Heart left ventricle (tissue), 16 donors: ENCODE measurements at regions of chr1 and their contacts with region 1.

Region 1: DNA sequence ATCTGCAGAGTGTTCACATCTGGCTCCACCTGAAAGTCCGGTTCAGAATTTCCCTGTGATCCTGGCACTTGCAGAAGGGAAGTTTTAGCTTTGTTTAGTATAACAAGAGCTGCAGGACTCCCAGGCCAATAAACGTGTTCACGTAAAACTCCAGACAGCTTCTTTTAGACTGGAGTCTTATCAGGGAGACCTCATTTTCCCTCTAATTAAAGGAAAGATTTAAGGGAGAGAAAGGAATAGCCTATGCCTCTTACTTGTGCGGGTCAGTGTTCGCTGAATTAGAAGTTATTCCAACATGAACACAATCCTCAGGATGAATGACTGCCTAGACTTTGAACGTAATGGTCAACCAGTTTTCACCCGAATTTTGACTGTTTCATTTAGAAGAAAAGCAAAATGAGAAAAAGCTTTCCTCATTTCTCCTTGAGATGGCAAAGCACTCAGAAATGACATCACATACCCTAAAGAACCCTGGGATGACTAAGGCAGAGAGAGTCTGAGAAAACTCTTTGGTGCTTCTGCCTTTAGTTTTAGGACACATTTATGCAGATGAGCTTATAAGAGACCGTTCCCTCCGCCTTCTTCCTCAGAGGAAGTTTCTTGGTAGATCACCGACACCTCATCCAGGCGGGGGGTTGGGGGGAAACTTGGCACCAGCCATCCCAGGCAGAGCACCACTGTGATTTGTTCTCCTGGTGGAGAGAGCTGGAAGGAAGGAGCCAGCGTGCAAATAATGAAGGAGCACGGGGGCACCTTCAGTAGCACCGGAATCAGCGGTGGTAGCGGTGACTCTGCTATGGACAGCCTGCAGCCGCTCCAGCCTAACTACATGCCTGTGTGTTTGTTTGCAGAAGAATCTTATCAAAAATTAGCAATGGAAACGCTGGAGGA is 202.1 kb upstream of the SGIP1 start:
- DNase-seq: peak; percentile 77 to 86 (median 80)
- ATAC-seq: peak; percentile 48 to 73 (median 65)
- H3K4me3 ChIP-seq: peak overlapping the region; percentile 28 to 71 (median 63)
- H3K27ac ChIP-seq: peak overlapping the region; percentile 76 to 98 (median 86)
- H3K4me1 ChIP-seq: peaks cover 4 to 75% (median 36%) of the 10 kb centered on the region in 12 donors
- H3K27me3 ChIP-seq: no peaks in the 10 kb centered on the region
- CTCF ChIP-seq: peak in 6 of 12 donors; percentile 8 to 41 (median 22)
- POLR2A ChIP-seq: peak in 1 of 2 donors; percentile 49

Region 2: DNA sequence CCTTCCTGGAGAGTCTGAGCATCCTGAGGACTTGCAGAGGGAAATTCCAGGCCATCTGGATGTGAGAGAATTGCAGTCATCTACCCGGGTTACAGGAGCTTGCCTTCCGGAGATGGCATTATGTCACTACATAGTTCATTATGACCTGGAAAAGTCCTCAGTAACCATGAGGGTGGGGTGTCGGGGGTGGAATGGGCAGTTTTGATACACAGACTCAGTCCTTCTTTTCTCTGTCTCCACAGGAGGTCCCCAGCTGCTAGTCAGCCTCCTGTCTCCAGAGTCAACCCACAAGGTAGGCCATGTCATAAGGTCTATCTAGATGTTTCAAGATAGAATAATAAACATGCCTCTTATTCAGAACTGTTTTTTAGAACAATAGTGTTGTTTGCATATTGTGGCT is 66.1 kb before region 1 on chr1:
- intact Hi-C with region 1: loop called in 6 of 10 experiments (anchors 2 to 5 kb)
- DNase-seq: peak in 2 of 5 donors; percentile 20 to 33
- ATAC-seq: peak in 2 of 4 donors; percentile 38 to 85
- H3K4me3 ChIP-seq: no peak overlapping the region
- H3K27ac ChIP-seq: peak overlapping the region in 7 of 12 donors; percentile 27 to 56 (median 45)
- H3K4me1 ChIP-seq: peaks cover 8 to 72% (median 27%) of the 10 kb centered on the region in 12 donors
- H3K27me3 ChIP-seq: no peaks in the 10 kb centered on the region
- CTCF ChIP-seq: peak in 1 of 12 donors; percentile 19
- POLR2A ChIP-seq: no peak

Region 3: GRCh38 chr1:66271216-66271903 is 60.5 kb before region 1 on chr1:
- intact Hi-C with region 1: loop called in 9 of 10 experiments (anchors 1 to 5 kb)
- DNase-seq: peak; percentile 72 to 92 (median 89)
- ATAC-seq: peak; percentile 90 to 96 (median 92)
- H3K4me3 ChIP-seq: peak overlapping the region in 9 of 12 donors; percentile 3 to 47 (median 17)
- H3K27ac ChIP-seq: peak overlapping the region; percentile 67 to 94 (median 84)
- H3K4me1 ChIP-seq: peaks cover 9 to 96% (median 51%) of the 10 kb centered on the region in 12 donors
- H3K27me3 ChIP-seq: no peaks in the 10 kb centered on the region
- CTCF ChIP-seq: no peak
- POLR2A ChIP-seq: peak in 1 of 2 donors; percentile 38

Region 4: DNA sequence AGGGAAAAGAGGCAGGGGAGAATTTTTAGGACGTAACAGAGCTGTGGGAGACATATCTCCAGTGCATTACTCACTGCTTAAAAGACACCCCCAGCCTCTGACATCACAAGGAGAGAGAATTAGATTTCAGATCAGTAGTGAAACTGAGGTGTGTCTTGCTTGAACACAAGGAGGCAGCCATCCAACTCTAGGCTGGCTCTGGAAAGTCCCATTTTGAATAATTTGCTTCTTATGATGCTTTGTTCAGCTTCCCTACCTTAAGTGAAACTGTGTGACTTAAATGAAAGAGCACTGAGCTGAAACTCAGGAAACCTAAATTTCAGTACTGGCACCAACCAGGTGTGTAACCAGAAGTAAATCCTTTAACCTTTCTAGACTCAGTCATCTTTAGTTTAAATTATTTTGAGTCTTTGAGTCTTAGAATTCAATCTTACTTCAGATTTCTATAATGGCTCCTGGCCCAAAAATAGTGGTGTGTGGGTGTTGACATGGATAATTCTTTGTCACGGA is 49.5 kb before region 1 on chr1:
- intact Hi-C with region 1: loop called in 1 of 10 experiments (anchors 5 kb)
- DNase-seq: peak in 1 of 5 donors; percentile 28
- ATAC-seq: peak in 3 of 4 donors; percentile 41 to 81 (median 77)
- H3K4me3 ChIP-seq: no peak overlapping the region
- H3K27ac ChIP-seq: peak overlapping the region in 5 of 12 donors; percentile 7 to 78 (median 61)
- H3K4me1 ChIP-seq: peaks cover 0 to 59% (median 15%) of the 10 kb centered on the region in 12 donors
- H3K27me3 ChIP-seq: no peaks in the 10 kb centered on the region
- CTCF ChIP-seq: peak in 4 of 12 donors; percentile 7 to 36 (median 24)
- POLR2A ChIP-seq: no peak

Region 5: GRCh38 chr1:66350001-66350547 is 18.2 kb after region 1 on chr1:
- intact Hi-C with region 1: loop called in 1 of 10 experiments (anchors 2 kb)
- DNase-seq: peak; percentile 49 to 68 (median 58)
- ATAC-seq: peak; percentile 62 to 91 (median 78)
- H3K4me3 ChIP-seq: peak overlapping the region in 2 of 12 donors; percentile 13 to 17
- H3K27ac ChIP-seq: peak overlapping the region; percentile 11 to 81 (median 63)
- H3K4me1 ChIP-seq: peaks cover 0 to 98% (median 62%) of the 10 kb centered on the region in 12 donors
- H3K27me3 ChIP-seq: no peaks in the 10 kb centered on the region
- CTCF ChIP-seq: no peak
- POLR2A ChIP-seq: no peak

Region 6: DNA sequence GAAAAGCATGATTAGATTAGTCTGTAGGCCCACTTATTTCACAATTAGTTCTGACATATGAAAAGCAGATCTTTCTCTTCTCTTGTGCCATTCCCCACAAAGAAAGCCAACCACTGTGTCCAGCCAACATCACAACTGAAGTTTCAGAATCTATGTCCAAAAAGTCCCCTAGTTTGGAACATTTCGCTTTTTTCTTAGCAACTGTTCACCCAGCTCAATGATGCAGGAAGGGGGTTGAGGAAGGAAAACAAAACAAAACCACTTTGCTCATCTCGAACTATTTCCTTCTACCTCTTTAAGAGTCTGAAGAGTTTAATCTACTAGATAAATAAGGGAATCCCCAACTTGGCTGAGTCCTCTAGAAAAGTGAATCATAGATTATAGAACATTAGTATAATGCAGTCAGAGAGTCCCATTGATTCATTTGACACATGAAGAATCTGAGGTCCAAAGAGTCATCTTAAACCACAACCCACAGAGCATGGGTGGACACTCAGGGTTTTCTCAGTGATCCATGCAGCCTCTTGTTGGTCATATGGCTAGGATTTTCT is 42.7 kb after region 1 on chr1:
- intact Hi-C with region 1: loop called in 1 of 10 experiments (anchors 5 kb)
- DNase-seq: no peak
- ATAC-seq: peak in 3 of 4 donors; percentile 20 to 26 (median 23)
- H3K4me3 ChIP-seq: no peak overlapping the region
- H3K27ac ChIP-seq: peak overlapping the region in 3 of 12 donors; percentile 20 to 90 (median 44)
- H3K4me1 ChIP-seq: peaks cover 0 to 65% (median 19%) of the 10 kb centered on the region in 12 donors
- H3K27me3 ChIP-seq: no peaks in the 10 kb centered on the region
- CTCF ChIP-seq: no peak
- POLR2A ChIP-seq: no peak

Region 7: GRCh38 chr1:66395202-66396061 is 63.5 kb after region 1 on chr1:
- intact Hi-C with region 1: no loop called
- DNase-seq: peak in 1 of 5 donors; percentile 30
- ATAC-seq: peak in 3 of 4 donors; percentile 46 to 76 (median 57)
- H3K4me3 ChIP-seq: no peak overlapping the region
- H3K27ac ChIP-seq: peak overlapping the region in 3 of 12 donors; percentile 9 to 82 (median 25)
- H3K4me1 ChIP-seq: peaks cover 0 to 55% (median 2%) of the 10 kb centered on the region in 12 donors
- H3K27me3 ChIP-seq: no peaks in the 10 kb centered on the region
- CTCF ChIP-seq: no peak
- POLR2A ChIP-seq: no peak

Region 8: GRCh38 chr1:66446261-66447001 is 114.5 kb after region 1 on chr1:
- intact Hi-C with region 1: loop called in 7 of 10 experiments (anchors 2 to 10 kb)
- DNase-seq: peak in 2 of 5 donors; percentile 22 to 39
- ATAC-seq: peak in 3 of 4 donors; percentile 41 to 59 (median 57)
- H3K4me3 ChIP-seq: no peak overlapping the region
- H3K27ac ChIP-seq: peak overlapping the region in 5 of 12 donors; percentile 21 to 78 (median 64)
- H3K4me1 ChIP-seq: peaks cover 0 to 40% (median 19%) of the 10 kb centered on the region in 12 donors
- H3K27me3 ChIP-seq: no peaks in the 10 kb centered on the region
- CTCF ChIP-seq: peak; percentile 74 to 94 (median 88)
- POLR2A ChIP-seq: no peak